Aorta (tissue), 5 donors: ENCODE measurements at regions of chr2 and their contacts with region 1.

Region 1: GRCh38 chr2:224894356-224894755 is 147.9 kb downstream of the DOCK10 start:
- DNase-seq: no peak
- ATAC-seq: no peak
- H3K4me3 ChIP-seq: no peak overlapping the region
- H3K27ac ChIP-seq: no peak overlapping the region
- H3K4me1 ChIP-seq: no peaks in the 10 kb centered on the region
- H3K27me3 ChIP-seq: no peaks in the 10 kb centered on the region

Region 2: GRCh38 chr2:224957540-224958461 is 63.4 kb after region 1 on chr2:
- intact Hi-C with region 1: loop called in 1 of 2 experiments (anchors 2 kb)
- DNase-seq: no peak
- ATAC-seq: peak; percentile 36
- H3K4me3 ChIP-seq: no peak overlapping the region
- H3K27ac ChIP-seq: peak overlapping the region; percentile 3 to 4
- H3K4me1 ChIP-seq: peaks cover 4 to 14% of the 10 kb centered on the region in 2 donors
- H3K27me3 ChIP-seq: no peaks in the 10 kb centered on the region

Region 3: DNA sequence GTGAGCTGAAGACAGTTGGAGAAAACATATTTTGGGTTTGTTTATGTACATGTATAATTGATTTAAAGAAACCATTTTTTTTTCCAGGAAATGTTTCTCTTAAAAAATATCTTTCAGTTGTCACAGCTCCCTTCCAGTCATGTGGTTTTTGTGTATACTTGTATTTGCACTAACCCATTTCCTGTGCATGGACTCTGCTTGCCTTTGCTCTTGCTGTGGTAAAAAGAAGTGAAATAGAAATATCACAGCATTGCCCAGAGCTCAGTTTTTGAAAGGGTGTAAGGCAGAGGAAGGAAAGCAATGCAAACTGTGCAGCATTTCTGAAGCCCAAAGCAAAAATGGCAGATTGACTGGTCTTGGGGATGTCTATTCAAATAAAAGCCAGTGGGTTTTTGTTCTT is 158.3 kb after region 1 on chr2:
- intact Hi-C with region 1: no loop called
- DNase-seq: no peak
- ATAC-seq: no peak
- H3K4me3 ChIP-seq: no peak overlapping the region
- H3K27ac ChIP-seq: no peak overlapping the region
- H3K4me1 ChIP-seq: peaks cover 0 to 2% of the 10 kb centered on the region in 2 donors
- H3K27me3 ChIP-seq: no peaks in the 10 kb centered on the region